A549 (cell line): ENCODE measurements at regions of chrX and their contacts with region 1.

Region 1: DNA sequence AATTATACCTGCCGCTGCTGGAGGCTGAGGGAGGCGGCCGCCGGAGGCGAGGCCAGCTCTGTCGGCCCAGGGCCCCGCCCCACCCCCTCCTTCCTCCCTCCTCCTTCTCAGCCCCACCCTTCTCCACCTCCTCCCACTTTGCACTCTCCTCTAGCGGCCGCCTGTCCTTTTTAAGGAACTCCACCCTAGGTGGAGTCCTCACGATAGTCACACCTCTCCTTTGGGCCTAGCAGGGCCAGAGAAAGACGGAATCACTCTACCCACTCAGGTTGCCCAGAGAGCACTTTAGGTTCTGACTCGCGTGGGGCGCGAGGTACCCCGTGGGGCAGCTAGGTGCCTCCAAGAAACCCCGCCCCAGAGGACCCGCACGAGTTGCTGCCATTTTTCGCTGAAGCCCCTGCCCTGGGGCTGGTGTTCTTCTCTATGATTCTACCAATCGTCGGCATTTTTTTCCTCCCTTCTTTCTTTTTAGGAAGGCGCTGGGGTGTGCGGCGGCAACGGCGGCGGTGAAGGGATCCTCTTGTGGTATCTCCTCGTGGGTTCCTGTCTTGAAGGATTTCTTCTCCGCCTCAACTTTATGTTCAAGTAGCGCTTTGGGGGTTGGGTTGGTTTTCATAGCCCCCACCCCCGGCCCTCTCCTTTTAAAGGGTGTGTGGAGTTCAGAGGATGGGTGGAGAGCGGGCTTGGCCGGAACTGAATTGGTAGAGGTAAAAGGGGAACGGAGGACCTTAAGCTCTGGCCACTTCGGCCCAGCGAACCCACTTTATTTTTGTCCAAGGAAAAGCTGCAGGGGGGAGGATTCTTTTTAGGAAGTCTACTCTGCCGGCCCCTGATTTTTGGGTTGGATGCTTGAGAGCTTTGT is at the start of gene KLF8:
- DNase-seq: no peak
- ATAC-seq: peak in 1 of 2 experiments; percentile 57; a peak in 3 of 6 replicates
- H3K4me3 ChIP-seq: no peak within 1 kb of the TSS
- H3K27ac ChIP-seq: no peak within 1 kb of the TSS
- H3K4me1 ChIP-seq: no peaks in the 10 kb centered on the region
- CTCF ChIP-seq: no peak
- EP300 ChIP-seq: no peak
- POLR2A ChIP-seq: no peak
- RAD21 ChIP-seq: no peak
- polyA plus RNA-seq, gene KLF8: 0.18 and 0.41 TPM in 2 replicates

Region 2: GRCh38 chrX:56219700-56220099 is 12.8 kb before region 1 on chrX:
- CTCF ChIA-PET with region 1: no interaction called
- POLR2A ChIA-PET with region 1: no interaction called
- DNase-seq: no peak
- ATAC-seq: no peak
- H3K4me3 ChIP-seq: no peak overlapping the region
- H3K27ac ChIP-seq: no peak overlapping the region
- H3K4me1 ChIP-seq: no peaks in the 10 kb centered on the region
- CTCF ChIP-seq: no peak
- EP300 ChIP-seq: no peak
- POLR2A ChIP-seq: no peak
- RAD21 ChIP-seq: no peak; a peak in 1 of 5 replicates

Region 3: GRCh38 chrX:56248492-56248891 is 16.0 kb after region 1 on chrX:
- CTCF ChIA-PET with region 1: interaction called, 13 read pairs
- POLR2A ChIA-PET with region 1: no interaction called
- DNase-seq: peak; percentile 10 to 51
- ATAC-seq: peak; percentile 73 to 82
- H3K4me3 ChIP-seq: no peak overlapping the region
- H3K27ac ChIP-seq: no peak overlapping the region
- H3K4me1 ChIP-seq: no peaks in the 10 kb centered on the region
- CTCF ChIP-seq: peak; percentile 62
- EP300 ChIP-seq: no peak
- POLR2A ChIP-seq: no peak
- RAD21 ChIP-seq: peak; percentile 78 to 80